ENCODE measurements at regions of chr20 and their contacts with region 1.

Region 1: GRCh38 chr20:37007898-37008649 is 56.6 kb upstream of the SAMHD1 start:
- DNase-seq: peak; percentile 44 to 69 (median 62)
- H3K4me3 ChIP-seq: no peak overlapping the region
- H3K4me3 Mint-ChIP-seq: peak overlapping the region in 4 of 8 donors; percentile 29 to 66 (median 64)
- H3K27ac ChIP-seq: peak overlapping the region; percentile 26
- H3K27ac Mint-ChIP-seq: peak overlapping the region; percentile 43 to 92 (median 85)
- H3K4me1 ChIP-seq: peaks cover 17% of the 10 kb centered on the region
- H3K4me1 Mint-ChIP-seq: peaks cover 10 to 19% (median 15%) of the 10 kb centered on the region in 4 donors
- H3K27me3 ChIP-seq: no peaks in the 10 kb centered on the region
- H3K27me3 Mint-ChIP-seq: no peaks in the 10 kb centered on the region

Region 2: DNA sequence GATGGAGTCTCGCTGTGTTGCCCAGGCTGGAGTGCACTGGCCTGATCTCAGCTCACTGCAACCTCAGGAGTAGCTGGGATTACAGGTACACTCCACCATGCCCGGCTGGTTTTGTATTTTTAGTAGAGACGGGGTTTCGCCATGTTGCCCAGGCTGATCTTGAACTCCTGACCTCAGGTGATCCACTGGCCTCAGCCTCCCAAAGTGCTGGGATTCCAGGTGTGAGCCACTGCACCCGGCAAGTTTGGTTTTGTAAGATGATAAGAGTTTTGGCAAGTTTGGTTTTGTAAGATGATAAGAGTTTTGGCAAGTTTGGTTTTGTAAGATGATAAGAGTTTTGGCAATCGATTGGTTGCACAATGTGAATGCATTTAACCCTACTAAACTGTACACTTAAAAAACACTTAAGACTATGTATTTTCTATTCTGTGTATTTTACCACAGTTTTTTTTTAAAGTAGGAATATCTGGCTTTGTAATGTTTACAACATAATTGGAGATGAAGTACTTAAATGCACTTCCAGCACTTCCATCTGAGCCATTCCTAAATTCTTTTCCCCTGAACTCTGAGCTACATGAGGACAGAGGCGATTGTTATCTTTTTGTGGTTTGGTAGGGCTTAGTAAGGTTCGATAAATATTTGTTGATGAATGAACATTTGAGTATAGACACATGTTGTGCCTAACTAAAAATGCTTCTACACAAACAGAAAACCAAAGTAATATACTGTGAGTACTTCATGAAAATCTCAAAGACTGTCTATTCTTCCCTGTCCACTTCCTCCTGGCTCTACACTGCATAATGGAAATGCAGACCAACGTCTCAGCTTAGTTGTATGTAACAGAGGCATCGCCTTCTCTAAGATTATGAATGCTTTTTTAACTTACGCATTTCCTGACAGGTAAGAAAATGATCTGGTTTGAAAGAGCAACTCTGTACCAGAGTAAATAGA is 75.3 kb before region 1 on chr20:
- CTCF ChIA-PET with region 1: interaction called, 5 read pairs
- POLR2A ChIA-PET with region 1: interaction called, 3 read pairs
- intact Hi-C with region 1: loop called (anchors 2 kb)
- DNase-seq: no peak
- H3K4me3 ChIP-seq: no peak overlapping the region
- H3K4me3 Mint-ChIP-seq: peak overlapping the region in 7 of 8 donors; percentile 8 to 63 (median 47)
- H3K27ac ChIP-seq: no peak overlapping the region
- H3K27ac Mint-ChIP-seq: peak overlapping the region; percentile 67 to 92 (median 89)
- H3K4me1 ChIP-seq: peaks cover 86% of the 10 kb centered on the region
- H3K4me1 Mint-ChIP-seq: peaks cover 27 to 79% (median 56%) of the 10 kb centered on the region in 4 donors
- H3K27me3 ChIP-seq: no peaks in the 10 kb centered on the region
- H3K27me3 Mint-ChIP-seq: no peaks in the 10 kb centered on the region

Region 3: DNA sequence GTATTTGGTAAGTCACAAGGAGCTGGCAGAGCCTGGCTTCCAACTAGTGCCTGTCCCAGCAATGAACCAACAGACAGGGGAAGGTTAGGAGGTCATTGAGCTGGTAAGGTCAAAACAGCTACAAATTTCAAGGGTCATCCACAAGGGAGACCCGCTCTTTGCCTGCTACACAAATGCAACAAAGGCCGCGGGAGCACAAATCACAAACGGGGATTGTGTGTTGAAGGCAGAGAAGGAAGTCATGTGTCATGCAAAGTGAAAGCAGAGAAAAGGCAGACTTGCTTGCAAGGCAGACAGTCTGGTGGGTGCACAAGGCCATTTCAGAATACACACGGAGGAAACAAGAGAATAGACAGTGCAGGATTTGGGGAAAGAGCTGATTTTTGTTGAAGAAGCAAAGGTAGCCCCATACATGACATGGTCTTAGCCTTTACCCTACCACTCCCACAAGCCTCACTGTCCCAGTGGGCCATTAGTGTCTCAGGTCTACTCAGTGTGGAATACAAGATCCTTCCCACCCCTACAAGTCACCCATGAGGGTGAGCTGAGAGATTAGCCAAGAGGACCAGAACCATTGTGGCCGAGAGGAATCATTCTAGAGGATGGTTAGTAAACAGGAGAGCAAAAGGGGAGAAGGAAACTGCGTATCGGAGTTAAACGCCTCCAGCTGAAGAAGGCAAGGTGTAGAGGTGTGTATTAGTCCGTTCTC is 38.4 kb before region 1 on chr20:
- CTCF ChIA-PET with region 1: interaction called, 13 read pairs
- POLR2A ChIA-PET with region 1: interaction called, 7 read pairs
- intact Hi-C with region 1: no loop called
- DNase-seq: peak in 4 of 5 donors; percentile 39 to 48 (median 45)
- H3K4me3 ChIP-seq: peak overlapping the region in 1 of 2 donors; percentile 51
- H3K4me3 Mint-ChIP-seq: peak overlapping the region; percentile 4 to 91 (median 80)
- H3K27ac ChIP-seq: peak overlapping the region; percentile 36
- H3K27ac Mint-ChIP-seq: peak overlapping the region; percentile 77 to 98 (median 95)
- H3K4me1 ChIP-seq: peaks cover 77% of the 10 kb centered on the region
- H3K4me1 Mint-ChIP-seq: peaks cover 45 to 74% (median 64%) of the 10 kb centered on the region in 4 donors
- H3K27me3 ChIP-seq: no peaks in the 10 kb centered on the region
- H3K27me3 Mint-ChIP-seq: no peaks in the 10 kb centered on the region

Region 4: DNA sequence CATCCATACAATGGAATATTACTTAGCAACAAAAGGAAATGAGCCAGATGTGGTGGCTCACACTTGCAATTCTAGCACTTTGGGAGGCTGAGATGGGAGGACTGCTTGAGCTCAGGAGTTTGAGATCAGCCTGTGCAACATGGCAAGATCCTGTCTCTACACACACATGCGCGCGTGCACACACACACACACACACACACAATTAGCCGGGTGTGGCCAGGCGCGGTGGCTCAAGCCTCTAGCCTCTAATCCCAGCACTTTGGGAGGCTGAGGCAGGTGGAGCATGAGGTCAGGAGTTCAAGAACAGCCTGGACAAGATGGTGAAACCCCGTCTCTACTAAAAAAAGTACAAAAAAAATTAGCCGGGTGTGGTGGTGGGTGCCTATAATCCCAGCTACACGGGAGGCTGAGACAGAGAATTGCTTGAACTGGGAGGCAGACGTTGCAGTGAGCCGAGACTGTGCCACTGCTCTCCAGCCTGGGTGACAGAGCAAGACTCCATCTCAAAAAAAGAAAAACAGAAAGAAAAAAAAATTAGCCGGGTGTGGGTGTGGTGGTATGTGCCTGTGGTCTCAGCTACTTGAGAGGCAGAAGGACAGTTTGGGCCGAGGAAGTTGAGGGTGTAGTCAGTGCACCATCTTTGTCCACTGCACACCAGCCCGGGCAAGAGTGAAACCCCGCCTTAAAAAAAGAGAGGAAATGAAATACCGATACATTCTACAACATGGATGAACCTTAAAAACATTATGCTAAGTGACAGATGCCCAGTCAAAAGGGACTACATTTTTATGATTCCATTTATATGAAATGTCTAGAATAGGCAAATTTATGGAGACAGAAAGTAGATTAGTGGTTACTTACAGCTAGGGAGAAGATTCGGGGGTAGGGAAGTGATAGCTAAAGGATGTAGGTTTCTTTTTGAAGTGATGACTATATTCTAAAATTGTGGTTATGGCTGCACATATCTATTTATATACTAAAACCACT is 35.2 kb after region 1 on chr20:
- CTCF ChIA-PET with region 1: interaction called, 21 read pairs
- POLR2A ChIA-PET with region 1: interaction called, 12 read pairs
- intact Hi-C with region 1: loop called (anchors 1 kb)
- DNase-seq: peak; percentile 45 to 61 (median 52)
- H3K4me3 ChIP-seq: peak overlapping the region; percentile 5 to 51
- H3K4me3 Mint-ChIP-seq: peak overlapping the region; percentile 87 to 98 (median 93)
- H3K27ac ChIP-seq: peak overlapping the region; percentile 53
- H3K27ac Mint-ChIP-seq: peak overlapping the region; percentile 88 to 99 (median 96)
- H3K4me1 ChIP-seq: peaks cover 28% of the 10 kb centered on the region
- H3K4me1 Mint-ChIP-seq: peaks cover 13 to 33% (median 23%) of the 10 kb centered on the region in 4 donors
- H3K27me3 ChIP-seq: no peaks in the 10 kb centered on the region
- H3K27me3 Mint-ChIP-seq: no peaks in the 10 kb centered on the region

Region 5: GRCh38 chr20:37081717-37082289 is 73.7 kb after region 1 on chr20:
- CTCF ChIA-PET with region 1: interaction called, 288 read pairs
- POLR2A ChIA-PET with region 1: interaction called, 22 read pairs
- intact Hi-C with region 1: loop called (anchors 1 kb)
- DNase-seq: peak in 4 of 5 donors; percentile 36 to 50 (median 44)
- H3K4me3 ChIP-seq: no peak overlapping the region
- H3K4me3 Mint-ChIP-seq: peak overlapping the region in 2 of 8 donors; percentile 16 to 26
- H3K27ac ChIP-seq: no peak overlapping the region
- H3K27ac Mint-ChIP-seq: peak overlapping the region; percentile 40 to 91 (median 67)
- H3K4me1 ChIP-seq: peaks cover 24% of the 10 kb centered on the region
- H3K4me1 Mint-ChIP-seq: peaks cover 16 to 25% (median 21%) of the 10 kb centered on the region in 4 donors
- H3K27me3 ChIP-seq: no peaks in the 10 kb centered on the region
- H3K27me3 Mint-ChIP-seq: no peaks in the 10 kb centered on the region

Region 6: GRCh38 chr20:37131486-37131885 is 123.4 kb after region 1 on chr20:
- CTCF ChIA-PET with region 1: no interaction called
- POLR2A ChIA-PET with region 1: no interaction called
- intact Hi-C with region 1: no loop called
- DNase-seq: no peak
- H3K4me3 ChIP-seq: no peak overlapping the region
- H3K4me3 Mint-ChIP-seq: no peak overlapping the region
- H3K27ac ChIP-seq: no peak overlapping the region
- H3K27ac Mint-ChIP-seq: no peak overlapping the region
- H3K4me1 ChIP-seq: no peaks in the 10 kb centered on the region
- H3K4me1 Mint-ChIP-seq: peaks cover 0 to 8% (median 2%) of the 10 kb centered on the region in 4 donors
- H3K27me3 ChIP-seq: no peaks in the 10 kb centered on the region
- H3K27me3 Mint-ChIP-seq: no peaks in the 10 kb centered on the region

Region 7: DNA sequence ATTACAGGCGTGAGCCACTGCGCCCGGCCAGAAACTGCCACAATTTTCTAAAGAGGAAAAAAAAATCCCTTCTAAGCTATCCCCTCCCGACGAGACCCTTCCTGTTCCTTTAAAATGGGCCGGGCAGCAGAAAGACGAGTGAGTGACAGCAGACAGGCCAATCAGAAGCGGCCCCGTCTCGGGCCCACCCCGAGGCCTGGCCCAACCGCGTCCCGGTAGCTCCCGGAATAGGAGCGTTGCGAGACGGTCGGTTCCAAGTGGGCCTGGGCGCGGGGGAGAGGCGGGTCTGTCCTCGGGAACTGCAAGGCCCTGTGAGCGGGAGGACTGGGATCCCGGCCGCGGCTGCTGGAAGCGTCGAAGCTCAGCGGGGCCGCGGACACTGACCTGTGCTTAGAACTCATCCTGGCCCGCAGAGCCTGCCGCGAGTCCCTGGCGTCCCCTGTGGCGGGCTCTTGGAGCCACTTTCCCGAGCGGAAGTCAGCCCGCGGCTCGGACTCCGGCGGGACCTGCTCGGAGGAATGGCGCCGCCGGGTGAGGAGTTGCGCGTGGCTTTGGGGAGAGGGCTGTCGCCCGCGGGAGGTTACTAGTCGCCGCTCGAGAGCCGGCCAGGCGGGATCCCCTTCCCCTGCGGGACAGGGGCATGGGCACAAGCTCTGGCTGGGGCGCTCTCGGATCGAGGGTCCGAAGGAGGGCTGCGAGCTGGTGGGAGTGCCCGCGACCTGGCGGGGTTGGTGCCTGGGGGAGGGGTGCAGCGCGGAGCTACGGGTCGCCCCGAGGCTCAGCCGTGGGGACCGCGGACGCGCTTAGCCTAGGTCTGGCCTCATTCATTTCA is 171.0 kb after region 1 on chr20 and contains the starts of genes MROH8 and RPN2:
- CTCF ChIA-PET with region 1: interaction called, 20 read pairs
- POLR2A ChIA-PET with region 1: interaction called, 15 read pairs
- intact Hi-C with region 1: no loop called
- DNase-seq: peak; percentile 92 to 96 (median 93)
- H3K4me3 ChIP-seq: peak within 1 kb of the TSS; percentile 96 to 97
- H3K4me3 Mint-ChIP-seq: peak within 1 kb of the TSS; percentile 92 to 99 (median 98)
- H3K27ac ChIP-seq: peak within 1 kb of the TSS; percentile 92
- H3K27ac Mint-ChIP-seq: peak within 1 kb of the TSS; percentile 96 to 98 (median 98)
- H3K4me1 ChIP-seq: peaks cover 46% of the 10 kb centered on the region
- H3K4me1 Mint-ChIP-seq: peaks cover 29 to 58% (median 43%) of the 10 kb centered on the region in 4 donors
- H3K27me3 ChIP-seq: no peaks in the 10 kb centered on the region
- H3K27me3 Mint-ChIP-seq: peaks cover 0 to 2% of the 10 kb centered on the region in 2 donors
- total RNA-seq, gene MROH8: 1.4 to 1.5 TPM
- total RNA-seq, gene RPN2: 125 to 127 TPM